Transverse colon (tissue), 4 donors: ENCODE measurements at regions of chr3 and their contacts with region 1.

Region 1: DNA sequence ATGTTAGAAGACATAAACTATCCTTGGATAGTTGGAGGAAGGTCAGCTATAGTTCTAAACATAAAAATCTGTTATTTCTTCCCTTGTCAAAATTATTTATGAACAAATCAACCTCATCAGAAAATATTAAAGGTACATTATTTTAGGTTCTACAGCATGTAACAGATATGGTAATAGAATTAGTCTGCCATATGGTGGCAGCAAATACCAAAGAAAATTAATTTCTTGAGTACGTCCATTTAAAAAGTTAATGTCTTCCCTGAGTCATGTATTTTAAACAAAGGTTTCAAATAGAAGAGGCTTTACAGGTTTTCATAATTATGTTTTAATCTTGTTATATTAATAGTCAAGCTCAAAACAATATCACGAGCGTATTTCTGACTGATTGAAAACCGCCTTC is 17.9 kb upstream of the ANKRD28 start:
- DNase-seq: no peak
- H3K4me3 ChIP-seq: no peak overlapping the region
- H3K27ac ChIP-seq: no peak overlapping the region
- H3K4me1 ChIP-seq: peaks cover 0 to 24% (median 8%) of the 10 kb centered on the region in 4 donors
- H3K27me3 ChIP-seq: no peaks in the 10 kb centered on the region
- CTCF ChIP-seq: peak in 4 of 5 experiments; percentile 18 to 27 (median 22)
- EP300 ChIP-seq: no peak
- POLR2A ChIP-seq: no peak

Region 2: DNA sequence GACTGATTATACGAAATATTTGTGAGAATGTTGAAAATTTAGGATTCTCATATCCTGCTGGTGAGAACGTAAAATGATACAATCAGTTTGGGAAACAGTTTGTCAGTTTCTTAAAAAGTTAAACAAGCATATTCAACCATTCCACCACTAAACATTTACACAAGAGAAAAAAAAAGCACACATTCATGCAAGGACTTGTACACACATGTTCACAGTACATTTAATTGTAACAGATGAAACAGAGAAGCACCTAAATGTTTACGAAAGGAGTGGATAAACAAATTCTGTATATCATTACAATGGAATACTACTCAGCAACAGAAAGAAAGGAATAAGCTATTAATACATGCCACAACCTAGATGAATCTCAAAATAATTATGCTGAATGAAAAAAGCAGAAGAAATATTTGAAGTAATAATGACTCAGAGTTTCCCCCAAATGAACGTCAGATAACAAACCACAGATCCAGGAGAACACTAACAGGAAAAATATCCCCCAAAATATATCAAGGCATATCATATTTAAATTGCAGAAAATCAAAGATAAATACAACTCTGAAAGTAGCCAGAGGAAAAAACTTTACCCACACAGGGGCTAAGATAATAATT is 32.2 kb before region 1 on chr3:
- in situ Hi-C with region 1: no loop called
- intact Hi-C with region 1: no loop called
- DNase-seq: no peak
- H3K4me3 ChIP-seq: no peak overlapping the region
- H3K27ac ChIP-seq: no peak overlapping the region
- H3K4me1 ChIP-seq: peaks cover 11 to 46% (median 13%) of the 10 kb centered on the region in 4 donors
- H3K27me3 ChIP-seq: no peaks in the 10 kb centered on the region
- CTCF ChIP-seq: no peak
- EP300 ChIP-seq: no peak
- POLR2A ChIP-seq: no peak

Region 3: GRCh38 chr3:15873441-15873840 is 57.7 kb after region 1 on chr3:
- in situ Hi-C with region 1: no loop called
- intact Hi-C with region 1: no loop called
- DNase-seq: no peak
- H3K4me3 ChIP-seq: no peak overlapping the region
- H3K27ac ChIP-seq: no peak overlapping the region
- H3K4me1 ChIP-seq: no peaks in the 10 kb centered on the region
- H3K27me3 ChIP-seq: no peaks in the 10 kb centered on the region
- CTCF ChIP-seq: no peak
- EP300 ChIP-seq: no peak
- POLR2A ChIP-seq: no peak

Region 4: GRCh38 chr3:16026753-16027152 is 211.1 kb after region 1 on chr3:
- in situ Hi-C with region 1: no loop called
- intact Hi-C with region 1: no loop called
- DNase-seq: no peak
- H3K4me3 ChIP-seq: no peak overlapping the region
- H3K27ac ChIP-seq: no peak overlapping the region
- H3K4me1 ChIP-seq: no peaks in the 10 kb centered on the region
- H3K27me3 ChIP-seq: no peaks in the 10 kb centered on the region
- CTCF ChIP-seq: no peak
- EP300 ChIP-seq: no peak
- POLR2A ChIP-seq: no peak

Region 5: GRCh38 chr3:16177962-16178627 is 362.4 kb after region 1 on chr3:
- in situ Hi-C with region 1: no loop called
- intact Hi-C with region 1: loop called (anchors 10 kb)
- DNase-seq: peak; percentile 79
- H3K4me3 ChIP-seq: peak overlapping the region in 1 of 4 donors; percentile 0
- H3K27ac ChIP-seq: no peak overlapping the region
- H3K4me1 ChIP-seq: peaks cover 0 to 16% (median 5%) of the 10 kb centered on the region in 4 donors
- H3K27me3 ChIP-seq: no peaks in the 10 kb centered on the region
- CTCF ChIP-seq: peak; percentile 88 to 97 (median 92)
- EP300 ChIP-seq: no peak
- POLR2A ChIP-seq: no peak

Region 6: DNA sequence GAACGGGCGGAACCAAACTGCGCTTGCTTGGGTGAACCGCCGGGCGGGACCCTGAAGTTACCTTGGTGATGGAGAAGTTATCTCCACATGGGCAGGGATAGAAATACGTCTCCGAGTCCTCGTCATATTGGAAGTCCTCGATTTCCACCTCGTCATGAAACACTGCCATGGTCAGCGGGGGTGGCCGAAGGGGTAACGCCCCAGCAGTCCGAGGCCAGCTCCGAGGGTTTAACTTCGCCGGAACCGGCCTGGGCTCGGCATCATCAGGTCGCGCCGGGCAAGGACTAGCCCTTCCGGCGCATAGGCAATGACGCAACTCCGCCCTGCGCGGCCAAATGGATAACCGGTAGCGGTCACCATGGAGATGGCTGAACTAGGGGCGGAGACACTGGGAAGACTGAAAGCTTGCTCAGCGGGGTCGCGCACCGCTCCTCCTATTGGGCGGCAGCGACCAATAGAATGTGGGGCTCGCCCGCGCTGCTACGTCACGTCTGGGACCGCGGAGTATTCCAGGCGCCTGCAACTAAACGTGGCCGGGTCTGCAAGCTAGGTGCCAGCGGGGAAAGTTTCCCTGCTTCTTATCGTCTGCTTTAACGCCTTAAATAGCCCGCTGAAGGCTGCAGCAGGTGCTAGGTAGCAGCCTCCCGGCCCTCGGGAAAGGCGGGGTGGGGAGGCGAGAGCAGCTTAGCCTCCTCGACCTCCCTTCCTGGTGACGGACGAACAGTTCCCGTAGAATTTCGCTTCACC is 449.2 kb after region 1 on chr3 and contains the starts of genes DPH3 and OXNAD1:
- in situ Hi-C with region 1: loop called in 1 of 4 experiments (anchors 25 kb)
- intact Hi-C with region 1: no loop called
- DNase-seq: peak; percentile 100
- H3K4me3 ChIP-seq: peak within 1 kb of the TSS; percentile 69 to 83 (median 76)
- H3K27ac ChIP-seq: peak within 1 kb of the TSS; percentile 92 to 97 (median 93)
- H3K4me1 ChIP-seq: peaks cover 7 to 47% (median 29%) of the 10 kb centered on the region in 4 donors
- H3K27me3 ChIP-seq: no peaks in the 10 kb centered on the region
- CTCF ChIP-seq: peak; percentile 2 to 79 (median 18)
- EP300 ChIP-seq: no peak
- POLR2A ChIP-seq: peak; percentile 92
- total RNA-seq, gene DPH3: 5.0 to 22.4 (median 12.4) TPM
- total RNA-seq, gene OXNAD1: 20.6 to 91.1 (median 40.0) TPM